Activated CD4-positive, alpha-beta memory T cell treated with anti-CD3 and anti-CD28 coated beads for 36 hours (primary cell): ENCODE measurements at regions of chr3 and their contacts with region 1.

Region 1: GRCh38 chr3:110814170-110815007 is 257.2 kb upstream of the NECTIN3 start:
- DNase-seq: peak; percentile 81
- H3K4me3 Mint-ChIP-seq: peak overlapping the region; percentile 12
- H3K27ac Mint-ChIP-seq: peak overlapping the region; percentile 78
- H3K4me1 Mint-ChIP-seq: peaks cover 19% of the 10 kb centered on the region
- H3K27me3 Mint-ChIP-seq: peaks cover 15% of the 10 kb centered on the region

Region 2: DNA sequence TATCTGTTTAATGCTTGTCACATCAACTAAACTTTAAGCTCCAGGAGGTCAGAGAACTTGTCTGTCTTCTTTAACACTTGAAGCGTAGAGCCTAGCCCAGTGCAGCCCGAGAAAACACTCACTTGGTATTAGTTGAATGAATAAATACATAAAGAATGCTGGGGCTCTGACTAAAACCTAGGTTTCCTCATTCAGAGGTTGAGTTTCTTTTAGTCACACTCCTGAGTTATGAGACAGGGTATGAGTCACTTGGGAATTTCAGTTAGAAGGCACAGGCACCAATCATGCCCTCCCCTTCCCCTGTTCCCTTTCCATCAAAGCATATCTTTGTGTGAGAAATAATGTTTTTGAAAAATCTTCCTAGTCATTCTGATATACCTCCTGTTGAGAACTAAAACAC is 887.2 kb before region 1 on chr3:
- CTCF ChIA-PET with region 1: no interaction called
- POLR2A ChIA-PET with region 1: no interaction called
- intact Hi-C with region 1: loop called (anchors 1 kb)
- DNase-seq: peak; percentile 34
- H3K4me3 Mint-ChIP-seq: no peak overlapping the region
- H3K27ac Mint-ChIP-seq: no peak overlapping the region
- H3K4me1 Mint-ChIP-seq: peaks cover 5% of the 10 kb centered on the region
- H3K27me3 Mint-ChIP-seq: no peaks in the 10 kb centered on the region

Region 3: GRCh38 chr3:110900576-110900975 is 86.2 kb after region 1 on chr3:
- CTCF ChIA-PET with region 1: no interaction called
- POLR2A ChIA-PET with region 1: no interaction called
- intact Hi-C with region 1: no loop called
- DNase-seq: no peak
- H3K4me3 Mint-ChIP-seq: no peak overlapping the region
- H3K27ac Mint-ChIP-seq: no peak overlapping the region
- H3K4me1 Mint-ChIP-seq: no peaks in the 10 kb centered on the region
- H3K27me3 Mint-ChIP-seq: no peaks in the 10 kb centered on the region

Region 4: GRCh38 chr3:111071257-111072015 is 257.0 kb after region 1 on chr3 and contains the start of gene NECTIN3:
- CTCF ChIA-PET with region 1: no interaction called
- POLR2A ChIA-PET with region 1: no interaction called
- intact Hi-C with region 1: loop called (anchors 1 kb)
- DNase-seq: peak; percentile 92
- H3K4me3 Mint-ChIP-seq: peak within 1 kb of the TSS; percentile 91
- H3K27ac Mint-ChIP-seq: peak within 1 kb of the TSS; percentile 75
- H3K4me1 Mint-ChIP-seq: peaks cover 41% of the 10 kb centered on the region
- H3K27me3 Mint-ChIP-seq: peaks cover 20% of the 10 kb centered on the region
- total RNA-seq, gene NECTIN3: 10.5 to 11.3 TPM

Region 5: DNA sequence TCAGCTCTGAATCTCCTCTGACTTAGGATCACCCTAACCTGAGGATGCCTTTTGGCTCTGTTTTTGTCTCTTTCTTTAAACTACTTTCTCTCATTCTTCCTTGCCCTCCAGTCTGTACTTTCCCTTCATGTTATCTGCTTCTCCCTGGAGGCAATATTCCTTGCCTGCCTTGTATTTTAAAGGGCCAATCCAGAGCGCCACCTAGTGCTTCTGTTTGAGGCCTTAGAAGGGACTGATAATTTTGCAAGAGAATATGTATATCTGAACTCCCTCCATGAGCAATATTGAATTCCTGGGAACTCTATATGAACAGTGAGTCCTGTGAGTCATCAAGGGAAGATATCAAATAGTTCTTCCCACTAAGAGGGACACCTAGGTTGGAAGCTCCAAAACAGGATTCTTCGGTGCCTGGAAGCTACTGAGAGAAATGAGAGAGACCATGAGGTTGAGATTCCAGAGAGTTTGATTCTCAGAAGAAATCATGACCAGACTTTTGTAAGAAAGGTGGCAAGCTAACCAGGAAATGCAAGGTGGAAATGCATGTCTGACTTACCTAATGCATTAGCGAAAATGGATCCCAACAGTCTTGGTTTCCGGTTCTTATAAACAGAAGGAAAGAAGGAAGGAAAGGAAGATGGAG is 523.8 kb after region 1 on chr3:
- CTCF ChIA-PET with region 1: no interaction called
- POLR2A ChIA-PET with region 1: no interaction called
- intact Hi-C with region 1: loop called (anchors 10 kb)
- DNase-seq: peak; percentile 50
- H3K4me3 Mint-ChIP-seq: no peak overlapping the region
- H3K27ac Mint-ChIP-seq: no peak overlapping the region
- H3K4me1 Mint-ChIP-seq: peaks cover 12% of the 10 kb centered on the region
- H3K27me3 Mint-ChIP-seq: peaks cover 2% of the 10 kb centered on the region